Mucosa of descending colon (tissue), 3 donors: ENCODE measurements at regions of chr12 and their contacts with region 1.

Region 1: GRCh38 chr12:116015525-116015924 is 262.0 kb downstream of the MED13L start:
- DNase-seq: no peak
- ATAC-seq: peak; percentile 64
- H3K4me3 ChIP-seq: no peak overlapping the region
- H3K4me1 ChIP-seq: no peaks in the 10 kb centered on the region
- CTCF ChIP-seq: no peak

Region 2: DNA sequence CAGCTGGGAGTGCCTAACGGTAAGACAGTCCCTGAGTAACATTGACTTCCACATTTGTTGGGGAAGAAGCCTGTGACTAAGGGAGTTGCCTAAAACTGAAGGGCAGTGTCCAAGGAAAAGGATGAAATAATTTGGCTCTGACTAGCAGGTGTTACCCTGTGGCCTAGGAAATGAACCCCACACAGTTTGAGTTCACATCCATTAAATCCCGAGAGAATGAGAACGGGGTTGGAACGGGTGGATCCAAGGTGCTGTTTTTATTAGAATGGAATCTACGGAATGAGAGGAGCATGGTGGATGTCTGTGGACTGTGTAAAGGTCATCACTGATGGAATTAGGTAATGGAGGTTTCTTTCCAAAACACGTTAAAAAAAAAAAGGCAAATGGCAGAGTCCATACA is 62.1 kb before region 1 on chr12:
- intact Hi-C with region 1: no loop called
- DNase-seq: no peak
- ATAC-seq: no peak
- H3K4me3 ChIP-seq: no peak overlapping the region
- H3K4me1 ChIP-seq: no peaks in the 10 kb centered on the region
- CTCF ChIP-seq: no peak

Region 3: GRCh38 chr12:116236148-116236731 is 220.7 kb after region 1 on chr12:
- intact Hi-C with region 1: loop called in 1 of 2 experiments (anchors 10 kb)
- DNase-seq: peak in 1 of 3 donors; percentile 58
- ATAC-seq: peak; percentile 74
- H3K4me3 ChIP-seq: no peak overlapping the region
- H3K4me1 ChIP-seq: peaks cover 6% of the 10 kb centered on the region
- CTCF ChIP-seq: peak; percentile 14